SK-N-SH (cell line): ENCODE measurements at regions of chr4 and their contacts with region 1.

Region 1: DNA sequence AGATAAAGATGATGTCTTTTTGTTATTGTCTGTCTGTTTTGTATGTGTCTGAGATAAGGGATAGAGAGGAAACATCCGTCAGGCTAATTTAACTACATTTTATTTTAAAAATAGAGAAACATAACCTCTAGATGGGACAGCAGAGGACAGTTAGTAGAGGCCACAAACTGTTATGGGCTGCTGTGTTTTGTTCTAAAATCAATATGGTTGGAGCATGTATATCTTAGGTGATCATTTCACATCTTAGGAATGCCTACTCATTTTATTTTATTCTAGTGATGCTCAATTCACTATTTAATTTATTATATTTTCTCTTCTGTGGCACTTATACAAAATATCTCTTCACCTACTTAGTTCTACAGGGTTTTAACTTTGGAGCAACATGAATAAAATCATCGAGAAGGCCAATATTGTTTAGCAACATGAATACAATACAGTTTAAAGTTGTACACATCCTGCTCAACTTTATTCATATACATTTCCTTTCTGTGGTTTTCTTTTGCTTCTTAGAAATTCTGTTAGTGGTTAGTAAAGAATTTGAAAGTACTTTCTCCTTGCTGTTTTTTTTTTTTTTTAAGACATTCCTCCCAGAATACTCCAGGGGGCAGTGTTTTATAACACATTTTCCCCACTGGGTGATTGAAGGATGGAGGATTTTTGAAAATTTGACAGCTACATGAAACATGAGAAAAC is 392.9 kb downstream of the UNC5C start:
- DNase-seq: peak; percentile 41
- H3K4me3 ChIP-seq: peak overlapping the region in 1 of 2 experiments; percentile 37; a peak in 1 of 4 replicates
- H3K27ac ChIP-seq: peak overlapping the region in 1 of 2 experiments; percentile 34; a peak in 2 of 4 replicates
- H3K4me1 ChIP-seq: peaks cover 0 to 27% of the 10 kb centered on the region in 2 experiments; a peak in 2 of 4 replicates
- H3K27me3 ChIP-seq: no peaks in the 10 kb centered on the region
- CTCF ChIP-seq: peak; percentile 87
- EP300 ChIP-seq: 0 out of 4 replicates have a peak, but pooled peaks have one; percentile 9 to 17
- RAD21 ChIP-seq: peak; percentile 78

Region 2: GRCh38 chr4:95165926-95166524 is 10.1 kb after region 1 on chr4:
- CTCF ChIA-PET with region 1: interaction called, 29 read pairs
- POLR2A ChIA-PET with region 1: no interaction called
- DNase-seq: peak; percentile 59
- H3K4me3 ChIP-seq: no peak overlapping the region
- H3K27ac ChIP-seq: peak overlapping the region in 1 of 2 experiments; percentile 55; a peak in 2 of 4 replicates
- H3K4me1 ChIP-seq: peaks cover 0 to 15% of the 10 kb centered on the region in 2 experiments; a peak in 2 of 4 replicates
- H3K27me3 ChIP-seq: no peaks in the 10 kb centered on the region
- CTCF ChIP-seq: peak; percentile 73
- EP300 ChIP-seq: no peak
- RAD21 ChIP-seq: peak; percentile 91

Region 3: GRCh38 chr4:95193391-95194224 is 37.7 kb after region 1 on chr4:
- CTCF ChIA-PET with region 1: no interaction called
- POLR2A ChIA-PET with region 1: no interaction called
- DNase-seq: peak; percentile 32
- H3K4me3 ChIP-seq: no peak overlapping the region
- H3K27ac ChIP-seq: peak overlapping the region in 1 of 2 experiments; percentile 69; a peak in 2 of 4 replicates
- H3K4me1 ChIP-seq: peaks cover 0 to 39% of the 10 kb centered on the region in 2 experiments; a peak in 2 of 4 replicates
- H3K27me3 ChIP-seq: no peaks in the 10 kb centered on the region
- CTCF ChIP-seq: no peak
- EP300 ChIP-seq: peak in 1 of 2 experiments; percentile 44; a peak in 1 of 4 replicates
- RAD21 ChIP-seq: no peak

Region 4: DNA sequence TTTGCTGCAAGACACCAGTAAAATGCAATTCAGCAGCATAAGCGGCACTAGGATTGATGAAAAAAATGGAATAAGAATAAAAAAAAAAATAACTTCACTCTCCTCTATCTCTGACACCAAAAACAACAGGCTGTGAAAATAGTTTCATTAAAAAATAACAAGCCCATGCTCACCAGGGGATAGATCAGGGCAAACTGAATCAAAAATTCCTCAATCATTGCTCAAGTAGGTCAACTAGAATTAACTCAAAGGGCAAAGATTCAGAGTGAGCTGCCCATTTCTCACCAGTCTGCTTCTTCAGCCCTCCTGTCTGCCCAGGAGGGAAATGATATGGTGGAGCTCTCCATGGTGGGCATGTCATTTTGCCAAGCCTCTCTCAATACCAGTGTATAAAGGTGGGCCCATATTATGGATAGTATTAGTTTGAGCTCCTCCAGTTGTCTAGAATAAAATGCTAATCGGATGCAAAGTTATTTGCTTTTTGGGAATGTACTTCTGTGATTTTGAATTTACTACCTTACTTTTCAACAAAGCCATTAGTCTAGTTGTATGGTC is 238.9 kb after region 1 on chr4:
- CTCF ChIA-PET with region 1: no interaction called
- POLR2A ChIA-PET with region 1: no interaction called
- DNase-seq: no peak
- H3K4me3 ChIP-seq: no peak overlapping the region
- H3K27ac ChIP-seq: no peak overlapping the region
- H3K4me1 ChIP-seq: peaks cover 0 to 11% of the 10 kb centered on the region in 2 experiments; a peak in 2 of 4 replicates
- H3K27me3 ChIP-seq: no peaks in the 10 kb centered on the region
- CTCF ChIP-seq: no peak
- EP300 ChIP-seq: no peak
- RAD21 ChIP-seq: no peak